Activated CD4-positive, alpha-beta T cell treated with anti-CD3 and anti-CD28 coated beads for 36 hours (primary cell): ENCODE measurements at regions of chr11 and their contacts with region 1.

Region 1: DNA sequence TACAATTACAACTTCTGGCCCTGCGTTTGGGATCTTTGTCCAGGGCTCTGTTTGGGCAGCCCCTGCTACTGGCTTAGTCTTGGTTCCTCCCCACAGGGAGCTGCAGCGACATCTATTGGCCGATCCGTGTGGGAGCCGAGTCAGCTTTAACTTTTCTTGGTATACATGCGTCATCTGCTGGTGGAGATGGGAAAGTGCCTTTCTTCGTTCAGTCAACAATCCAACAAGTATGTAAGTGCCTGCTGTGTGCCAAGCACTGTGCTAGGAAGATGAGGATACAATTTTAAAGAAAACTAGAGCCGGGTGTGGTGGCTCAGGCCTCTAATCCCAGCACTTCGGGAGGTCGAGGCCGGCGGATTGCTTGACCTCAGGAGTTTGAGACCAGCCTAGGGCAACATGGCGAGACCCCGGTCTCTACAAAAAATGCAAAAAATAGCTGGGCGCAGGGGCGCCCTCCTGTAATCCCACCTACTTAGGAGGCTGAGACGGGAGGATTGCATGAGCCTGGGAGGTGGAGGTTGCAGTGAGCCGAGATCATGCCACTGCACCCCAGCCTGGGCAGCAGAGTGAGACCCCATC is 8.2 kb downstream of the TPBGL start:
- DNase-seq: peak; percentile 93
- ATAC-seq: peak; percentile 98
- H3K4me3 Mint-ChIP-seq: no peak overlapping the region
- H3K27ac Mint-ChIP-seq: no peak overlapping the region
- H3K4me1 Mint-ChIP-seq: no peaks in the 10 kb centered on the region
- H3K27me3 Mint-ChIP-seq: no peaks in the 10 kb centered on the region

Region 2: GRCh38 chr11:75022759-75023396 is 225.9 kb before region 1 on chr11:
- CTCF ChIA-PET with region 1: interaction called, 58 read pairs
- POLR2A ChIA-PET with region 1: no interaction called
- intact Hi-C with region 1: loop called (anchors 1 kb)
- DNase-seq: peak; percentile 86
- ATAC-seq: peak; percentile 91
- H3K4me3 Mint-ChIP-seq: no peak overlapping the region
- H3K27ac Mint-ChIP-seq: no peak overlapping the region
- H3K4me1 Mint-ChIP-seq: no peaks in the 10 kb centered on the region
- H3K27me3 Mint-ChIP-seq: no peaks in the 10 kb centered on the region

Region 3: DNA sequence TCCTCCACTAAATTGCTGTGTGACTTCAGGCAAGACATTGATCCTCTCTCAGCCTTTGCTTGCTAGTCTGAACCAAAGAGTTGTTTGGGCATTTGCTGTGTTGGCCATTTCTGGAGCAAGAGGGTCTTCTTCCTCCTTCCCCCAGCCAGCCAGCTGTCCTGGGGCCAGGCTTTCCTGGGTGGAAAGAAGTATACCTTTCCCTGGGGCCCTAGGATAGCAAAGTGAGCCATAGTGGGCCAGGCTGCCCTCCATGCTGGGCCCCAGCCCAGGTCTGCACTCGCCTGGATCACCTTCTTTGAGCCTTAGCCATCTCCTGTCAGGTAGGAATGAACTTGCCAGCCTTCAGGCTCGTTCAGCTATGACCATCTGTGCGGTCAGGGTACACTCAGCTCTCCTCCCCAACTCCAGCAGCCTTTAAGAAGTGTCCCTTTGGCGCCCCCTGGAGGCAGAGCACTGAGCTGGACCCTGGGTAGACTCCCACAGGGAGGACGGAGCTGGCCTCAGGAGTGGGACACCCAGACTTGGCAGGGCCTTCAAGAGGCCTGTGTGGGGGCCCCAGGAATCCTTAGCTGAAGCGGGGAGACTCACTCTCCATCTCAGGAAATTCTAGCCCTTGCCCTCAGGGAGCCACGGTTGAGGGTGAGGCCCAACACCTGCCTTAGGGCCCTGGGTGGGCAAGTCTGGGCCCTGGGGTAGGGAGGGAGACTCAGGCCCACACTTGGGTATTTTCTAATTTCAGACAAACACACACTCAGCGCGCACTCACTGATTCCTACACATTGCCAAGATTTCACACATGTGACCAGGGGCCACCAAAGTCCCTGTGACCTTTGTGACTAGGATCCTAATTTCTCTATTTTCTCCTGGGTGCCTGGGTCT is 43.9 kb before region 1 on chr11:
- CTCF ChIA-PET with region 1: interaction called, 32 read pairs
- POLR2A ChIA-PET with region 1: interaction called, 6 read pairs
- intact Hi-C with region 1: loop called in 1 of 2 experiments (anchors 1 kb)
- DNase-seq: peak; percentile 93
- ATAC-seq: peak; percentile 99
- H3K4me3 Mint-ChIP-seq: no peak overlapping the region
- H3K27ac Mint-ChIP-seq: no peak overlapping the region
- H3K4me1 Mint-ChIP-seq: no peaks in the 10 kb centered on the region
- H3K27me3 Mint-ChIP-seq: peaks cover 2% of the 10 kb centered on the region

Region 4: GRCh38 chr11:75214411-75214821 is 34.4 kb before region 1 on chr11:
- CTCF ChIA-PET with region 1: interaction called, 10 read pairs
- POLR2A ChIA-PET with region 1: no interaction called
- intact Hi-C with region 1: no loop called
- DNase-seq: peak; percentile 90
- ATAC-seq: peak; percentile 71
- H3K4me3 Mint-ChIP-seq: no peak overlapping the region
- H3K27ac Mint-ChIP-seq: no peak overlapping the region
- H3K4me1 Mint-ChIP-seq: no peaks in the 10 kb centered on the region
- H3K27me3 Mint-ChIP-seq: peaks cover 28% of the 10 kb centered on the region

Region 5: GRCh38 chr11:75262961-75263852 is 14.4 kb after region 1 on chr11:
- CTCF ChIA-PET with region 1: interaction called, 21 read pairs
- POLR2A ChIA-PET with region 1: interaction called, 3 read pairs
- intact Hi-C with region 1: no loop called
- DNase-seq: peak; percentile 3
- ATAC-seq: no peak
- H3K4me3 Mint-ChIP-seq: no peak overlapping the region
- H3K27ac Mint-ChIP-seq: no peak overlapping the region
- H3K4me1 Mint-ChIP-seq: peaks cover 41% of the 10 kb centered on the region
- H3K27me3 Mint-ChIP-seq: no peaks in the 10 kb centered on the region

Region 6: GRCh38 chr11:75270896-75271418 is 22.2 kb after region 1 on chr11:
- CTCF ChIA-PET with region 1: interaction called, 11 read pairs
- POLR2A ChIA-PET with region 1: no interaction called
- intact Hi-C with region 1: no loop called
- DNase-seq: no peak
- ATAC-seq: no peak
- H3K4me3 Mint-ChIP-seq: no peak overlapping the region
- H3K27ac Mint-ChIP-seq: no peak overlapping the region
- H3K4me1 Mint-ChIP-seq: peaks cover 25% of the 10 kb centered on the region
- H3K27me3 Mint-ChIP-seq: no peaks in the 10 kb centered on the region